Sigmoid colon (tissue), 7 donors: ENCODE measurements at regions of chr12 and their contacts with region 1.

Region 1: GRCh38 chr12:122021822-122022526 is at the start of gene BCL7A:
- DNase-seq: peak; percentile 89
- H3K4me3 ChIP-seq: peak within 1 kb of the TSS; percentile 61 to 84 (median 74)
- H3K27ac ChIP-seq: peak within 1 kb of the TSS; percentile 79 to 92 (median 87)
- H3K4me1 ChIP-seq: peaks cover 0 to 21% (median 16%) of the 10 kb centered on the region in 4 donors
- H3K27me3 ChIP-seq: no peaks in the 10 kb centered on the region
- CTCF ChIP-seq: no peak
- EP300 ChIP-seq: no peak
- POLR2A ChIP-seq: peak in 1 of 2 donors; percentile 52
- total RNA-seq, gene BCL7A: 6.2 to 6.9 (median 6.5) TPM

Region 2: DNA sequence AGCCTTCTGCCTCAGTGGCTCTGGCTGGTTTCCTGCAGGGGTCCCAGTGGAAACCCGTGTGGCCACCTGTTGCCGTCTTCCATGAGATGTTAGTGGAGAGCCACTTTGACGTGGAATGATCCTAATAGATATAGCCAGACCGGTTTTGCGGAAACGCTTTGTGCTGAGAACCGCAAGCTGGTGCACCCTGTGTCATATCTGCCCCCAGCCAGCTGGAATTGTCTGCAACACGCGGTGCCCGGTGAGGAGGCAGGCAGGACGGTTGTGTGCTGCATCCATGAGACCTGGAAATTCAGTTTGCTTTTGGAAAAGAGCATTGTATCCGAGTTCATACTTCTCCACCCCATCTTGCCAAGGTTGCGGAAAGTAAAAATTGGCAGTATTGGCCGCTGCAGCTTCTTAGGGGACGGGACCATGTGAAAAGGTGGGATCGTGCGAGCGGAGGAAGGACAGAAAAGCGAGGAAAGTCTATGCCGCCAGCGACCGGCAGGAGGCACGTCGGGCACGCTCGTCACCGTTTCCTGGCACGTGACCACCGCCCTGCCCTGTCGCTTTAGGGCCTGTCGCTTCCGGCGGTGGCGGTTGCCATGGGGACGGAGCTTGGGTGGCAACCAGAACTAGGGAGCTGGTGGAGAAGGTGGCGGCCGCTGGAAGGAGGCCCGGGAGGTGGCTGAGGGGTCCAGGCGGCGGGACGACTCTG is 103.8 kb before region 1 on chr12 and contains the start of gene CFAP251:
- intact Hi-C with region 1: loop called (anchors 1 kb)
- DNase-seq: peak; percentile 97
- H3K4me3 ChIP-seq: peak within 1 kb of the TSS; percentile 31 to 53 (median 44)
- H3K27ac ChIP-seq: peak within 1 kb of the TSS in 3 of 4 donors; percentile 38 to 52 (median 44)
- H3K4me1 ChIP-seq: peaks cover 0 to 8% (median 0%) of the 10 kb centered on the region in 4 donors
- H3K27me3 ChIP-seq: no peaks in the 10 kb centered on the region
- CTCF ChIP-seq: peak; percentile 53 to 78 (median 62)
- EP300 ChIP-seq: no peak
- POLR2A ChIP-seq: no peak
- total RNA-seq, gene CFAP251: 0.68 to 3.0 (median 1.2) TPM

Region 3: GRCh38 chr12:122225683-122226407 is 203.9 kb after region 1 on chr12 and contains the start of gene DIABLO:
- intact Hi-C with region 1: loop called (anchors 10 kb)
- DNase-seq: peak; percentile 100
- H3K4me3 ChIP-seq: peak within 1 kb of the TSS; percentile 74 to 93 (median 84)
- H3K27ac ChIP-seq: peak within 1 kb of the TSS; percentile 94 to 98 (median 96)
- H3K4me1 ChIP-seq: peaks cover 0 to 36% (median 25%) of the 10 kb centered on the region in 4 donors
- H3K27me3 ChIP-seq: no peaks in the 10 kb centered on the region
- CTCF ChIP-seq: no peak
- EP300 ChIP-seq: peak in 1 of 4 donors; percentile 6
- POLR2A ChIP-seq: peak; percentile 97
- total RNA-seq, gene DIABLO: 43.4 to 56.7 (median 50.7) TPM

Region 4: DNA sequence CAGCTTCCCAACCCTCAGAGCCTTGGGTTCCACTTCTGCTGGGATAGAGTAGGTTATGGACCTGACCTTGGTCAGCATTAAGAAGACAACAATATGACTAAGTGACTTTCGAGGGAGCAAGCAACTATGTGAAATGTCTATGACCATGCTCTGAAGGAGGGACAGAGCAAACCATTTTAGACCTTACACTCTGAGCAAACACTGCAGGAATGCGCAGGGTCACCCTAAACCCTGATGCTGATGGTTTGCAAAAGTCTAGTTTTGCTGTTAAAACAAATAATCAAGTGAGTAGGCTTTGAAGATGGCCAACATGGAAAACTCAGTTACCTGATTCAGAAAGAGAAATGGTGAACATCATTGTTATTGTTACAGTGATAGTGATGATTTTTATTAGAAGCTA is 470.0 kb after region 1 on chr12:
- intact Hi-C with region 1: no loop called
- DNase-seq: no peak
- H3K4me3 ChIP-seq: no peak overlapping the region
- H3K27ac ChIP-seq: no peak overlapping the region
- H3K4me1 ChIP-seq: peaks cover 0 to 4% (median 2%) of the 10 kb centered on the region in 4 donors
- H3K27me3 ChIP-seq: no peaks in the 10 kb centered on the region
- CTCF ChIP-seq: no peak
- EP300 ChIP-seq: no peak
- POLR2A ChIP-seq: no peak